ENCODE measurements at regions of chr4 and their contacts with region 1.

Region 1: GRCh38 chr4:15956179-15956850 is 6.7 kb downstream of the FGFBP2 start:
- DNase-seq: peak; percentile 58
- ATAC-seq: peak; percentile 85
- H3K4me3 ChIP-seq: no peak overlapping the region
- H3K27ac ChIP-seq: no peak overlapping the region
- H3K4me1 ChIP-seq: no peaks in the 10 kb centered on the region
- H3K27me3 ChIP-seq: no peaks in the 10 kb centered on the region
- CTCF ChIP-seq: peak; percentile 85

Region 2: GRCh38 chr4:15729910-15730533 is 226.3 kb before region 1 on chr4:
- CTCF ChIA-PET with region 1: no interaction called
- POLR2A ChIA-PET with region 1: no interaction called
- in situ Hi-C with region 1: no loop called
- intact Hi-C with region 1: loop called (anchors 10 kb)
- DNase-seq: peak; percentile 17
- ATAC-seq: 0 out of 2 replicates have a peak, but pooled peaks have one; percentile 63
- H3K4me3 ChIP-seq: no peak overlapping the region
- H3K27ac ChIP-seq: no peak overlapping the region
- H3K4me1 ChIP-seq: no peaks in the 10 kb centered on the region
- H3K27me3 ChIP-seq: no peaks in the 10 kb centered on the region
- CTCF ChIP-seq: peak; percentile 75; the same call in 1 of the 2 replicates

Region 3: GRCh38 chr4:15805583-15806517 is 150.5 kb before region 1 on chr4:
- CTCF ChIA-PET with region 1: interaction called, 6 read pairs
- POLR2A ChIA-PET with region 1: no interaction called
- in situ Hi-C with region 1: no loop called
- intact Hi-C with region 1: loop called (anchors 1 kb)
- DNase-seq: peak; percentile 22
- ATAC-seq: peak; percentile 82
- H3K4me3 ChIP-seq: no peak overlapping the region
- H3K27ac ChIP-seq: no peak overlapping the region
- H3K4me1 ChIP-seq: no peaks in the 10 kb centered on the region
- H3K27me3 ChIP-seq: no peaks in the 10 kb centered on the region
- CTCF ChIP-seq: peak; percentile 72

Region 4: GRCh38 chr4:15882675-15883086 is 73.6 kb before region 1 on chr4:
- CTCF ChIA-PET with region 1: interaction called, 26 read pairs
- POLR2A ChIA-PET with region 1: no interaction called
- in situ Hi-C with region 1: no loop called
- intact Hi-C with region 1: loop called (anchors 1 kb)
- DNase-seq: peak; percentile 65
- ATAC-seq: peak; percentile 88
- H3K4me3 ChIP-seq: no peak overlapping the region
- H3K27ac ChIP-seq: no peak overlapping the region
- H3K4me1 ChIP-seq: no peaks in the 10 kb centered on the region
- H3K27me3 ChIP-seq: no peaks in the 10 kb centered on the region
- CTCF ChIP-seq: peak; percentile 83

Measured in Panc1 (cell line).